GM12878 (cell line): ENCODE measurements at regions of chr11 and their contacts with region 1.

Region 1: GRCh38 chr11:112453601-112454577 is 193.2 kb upstream of the PLET1 start:
- DNase-seq: no peak
- ATAC-seq: peak; percentile 85
- H3K4me3 ChIP-seq: no peak overlapping the region
- H3K27ac ChIP-seq: no peak overlapping the region
- H3K4me1 ChIP-seq: no peaks in the 10 kb centered on the region
- H3K27me3 ChIP-seq: no peaks in the 10 kb centered on the region
- CTCF ChIP-seq: peak; percentile 34 to 48 (median 43)
- EP300 ChIP-seq: no peak
- POLR2A ChIP-seq: no peak
- RAD21 ChIP-seq: 0 out of 2 replicates have a peak, but pooled peaks have one; percentile 4

Region 2: GRCh38 chr11:112440518-112440917 is 13.4 kb before region 1 on chr11:
- CTCF ChIA-PET with region 1: interaction called, 11 read pairs
- POLR2A ChIA-PET with region 1: no interaction called
- RAD21 ChIA-PET with region 1: no interaction called
- SMC1A ChIA-PET with region 1: interaction called, 4 read pairs
- in situ Hi-C with region 1: no loop called
- intact Hi-C with region 1: no loop called
- DNase-seq: no peak
- ATAC-seq: no peak
- H3K4me3 ChIP-seq: no peak overlapping the region
- H3K27ac ChIP-seq: no peak overlapping the region
- H3K4me1 ChIP-seq: no peaks in the 10 kb centered on the region
- H3K27me3 ChIP-seq: no peaks in the 10 kb centered on the region
- CTCF ChIP-seq: peak; percentile 9 to 40 (median 24); a peak in 2 of 6 replicates
- EP300 ChIP-seq: no peak
- POLR2A ChIP-seq: no peak
- RAD21 ChIP-seq: peak; percentile 37; the same call in 1 of the 2 replicates